IMR-90 (cell line): ENCODE measurements at regions of chr4 and their contacts with region 1.

Region 1: DNA sequence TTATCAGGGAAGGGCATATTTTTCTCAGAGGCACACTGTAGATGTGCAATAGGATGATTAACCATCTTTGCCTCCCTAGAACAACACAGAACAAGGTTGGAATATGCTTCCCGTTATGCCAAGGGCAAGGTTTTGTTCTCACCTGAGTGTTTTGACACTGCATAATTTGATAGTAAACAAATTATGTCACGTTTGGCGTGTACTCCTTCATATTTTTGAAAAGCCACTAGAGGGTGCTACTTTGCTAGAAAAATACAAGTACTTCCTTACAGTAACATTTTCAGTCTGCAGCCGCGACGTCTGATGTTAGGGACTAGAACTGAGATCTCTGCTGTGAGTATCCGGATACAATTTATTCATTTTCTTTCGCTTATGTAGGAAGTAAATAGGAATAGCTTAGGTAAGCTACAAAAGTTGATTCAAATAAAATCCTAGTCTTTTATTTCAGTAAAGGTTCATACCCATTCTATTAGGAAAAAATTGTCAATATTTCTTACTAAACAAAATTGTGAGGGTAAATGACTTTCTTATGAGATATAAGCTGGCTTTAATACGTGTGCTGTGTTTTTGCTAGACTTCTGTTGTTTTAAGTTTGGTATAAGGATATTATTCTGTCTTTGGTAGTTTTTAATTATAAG is 181.1 kb upstream of the WDFY3 start:
- DNase-seq: peak; percentile 54
- ATAC-seq: peak; percentile 76
- H3K4me3 ChIP-seq: no peak overlapping the region
- H3K27ac ChIP-seq: no peak overlapping the region
- H3K4me1 ChIP-seq: no peaks in the 10 kb centered on the region
- H3K27me3 ChIP-seq: peaks cover 1% of the 10 kb centered on the region; the same call in 1 of the 2 replicates
- CTCF ChIP-seq: peak; percentile 57
- POLR2A ChIP-seq: no peak
- RAD21 ChIP-seq: peak; percentile 48

Region 2: GRCh38 chr4:85370430-85371032 is 223.0 kb after region 1 on chr4:
- CTCF ChIA-PET with region 1: interaction called, 4 read pairs
- POLR2A ChIA-PET with region 1: no interaction called
- dilution Hi-C with region 1: no loop called
- in situ Hi-C with region 1: no loop called
- intact Hi-C with region 1: loop called (anchors 1 kb)
- DNase-seq: peak; percentile 18
- ATAC-seq: peak; percentile 87
- H3K4me3 ChIP-seq: no peak overlapping the region
- H3K27ac ChIP-seq: no peak overlapping the region
- H3K4me1 ChIP-seq: no peaks in the 10 kb centered on the region
- H3K27me3 ChIP-seq: no peaks in the 10 kb centered on the region; the same call in 1 of the 2 replicates
- CTCF ChIP-seq: peak; percentile 57
- POLR2A ChIP-seq: no peak
- RAD21 ChIP-seq: peak; percentile 43

Region 3: DNA sequence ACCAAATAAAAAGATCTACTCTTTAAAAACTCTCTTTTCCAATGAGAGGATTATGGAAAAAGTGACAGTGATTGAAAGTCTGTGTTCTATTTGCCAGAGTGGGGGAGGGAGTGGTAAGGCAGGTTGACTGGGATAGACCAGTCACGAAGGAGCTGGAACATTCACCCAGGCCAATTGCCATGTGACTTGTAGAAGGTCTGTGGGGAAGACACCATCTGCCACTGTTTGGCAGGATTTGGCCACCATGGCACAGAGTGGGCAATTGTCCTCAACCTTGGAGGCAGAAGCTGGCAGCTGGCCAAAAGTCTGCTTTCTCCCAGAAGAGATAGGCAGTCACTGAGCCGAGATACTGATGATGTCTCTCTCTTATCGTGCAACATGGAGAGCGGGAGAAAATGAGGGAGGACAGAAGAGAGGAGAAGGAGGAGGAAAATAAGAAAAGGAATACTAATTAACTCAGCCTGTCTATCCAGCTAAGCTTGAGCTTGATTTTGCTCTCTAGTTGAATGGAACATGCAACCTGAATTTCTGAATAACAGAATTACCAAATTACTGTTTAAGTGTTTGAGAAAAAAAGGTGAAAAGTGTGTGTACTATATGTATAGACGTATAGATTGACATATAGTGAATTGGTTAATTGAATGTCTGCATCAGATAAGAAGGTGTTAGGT is 594.5 kb after region 1 on chr4:
- CTCF ChIA-PET with region 1: interaction called, 8 read pairs
- POLR2A ChIA-PET with region 1: no interaction called
- dilution Hi-C with region 1: no loop called
- in situ Hi-C with region 1: loop called (anchors 5 kb)
- intact Hi-C with region 1: no loop called
- DNase-seq: no peak
- ATAC-seq: no peak
- H3K4me3 ChIP-seq: no peak overlapping the region
- H3K27ac ChIP-seq: no peak overlapping the region
- H3K4me1 ChIP-seq: peaks cover 2% of the 10 kb centered on the region; the same call in 1 of the 2 replicates
- H3K27me3 ChIP-seq: no peaks in the 10 kb centered on the region
- CTCF ChIP-seq: no peak
- POLR2A ChIP-seq: no peak
- RAD21 ChIP-seq: no peak

Region 4: DNA sequence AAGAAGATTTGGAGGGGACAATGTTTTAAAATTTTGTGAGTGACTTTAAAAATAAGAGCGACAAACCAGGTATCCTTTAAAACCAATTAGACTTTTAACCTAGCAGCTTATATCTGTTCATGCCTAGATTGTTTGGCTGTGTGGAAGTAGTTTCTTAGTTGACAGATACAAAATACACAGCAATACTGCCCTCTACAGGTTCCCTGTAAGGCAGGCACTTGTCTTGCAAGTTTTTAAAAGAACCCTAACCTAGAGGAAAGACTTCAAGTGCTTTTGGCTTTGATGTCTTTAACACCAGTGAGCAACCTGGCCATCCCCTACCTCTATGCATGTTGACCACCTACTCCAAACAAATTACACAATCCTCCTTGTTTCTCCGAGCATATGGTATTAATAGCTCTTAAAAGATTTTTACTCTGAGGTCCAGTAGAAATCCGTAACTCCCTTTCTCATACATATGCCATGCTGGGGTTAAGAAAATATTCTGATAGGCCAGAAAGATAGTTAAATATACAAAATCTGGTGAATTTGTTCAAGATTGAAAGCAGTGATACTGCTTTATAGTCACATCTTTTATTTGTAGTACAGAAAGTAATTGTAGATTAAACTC is 600.4 kb after region 1 on chr4:
- CTCF ChIA-PET with region 1: interaction called, 8 read pairs
- POLR2A ChIA-PET with region 1: no interaction called
- dilution Hi-C with region 1: no loop called
- in situ Hi-C with region 1: loop called (anchors 5 kb)
- intact Hi-C with region 1: loop called (anchors 1 kb)
- DNase-seq: peak; percentile 83
- ATAC-seq: peak; percentile 83
- H3K4me3 ChIP-seq: no peak overlapping the region
- H3K27ac ChIP-seq: no peak overlapping the region
- H3K4me1 ChIP-seq: no peaks in the 10 kb centered on the region
- H3K27me3 ChIP-seq: no peaks in the 10 kb centered on the region
- CTCF ChIP-seq: peak; percentile 89
- POLR2A ChIP-seq: no peak
- RAD21 ChIP-seq: peak; percentile 81

Region 5: DNA sequence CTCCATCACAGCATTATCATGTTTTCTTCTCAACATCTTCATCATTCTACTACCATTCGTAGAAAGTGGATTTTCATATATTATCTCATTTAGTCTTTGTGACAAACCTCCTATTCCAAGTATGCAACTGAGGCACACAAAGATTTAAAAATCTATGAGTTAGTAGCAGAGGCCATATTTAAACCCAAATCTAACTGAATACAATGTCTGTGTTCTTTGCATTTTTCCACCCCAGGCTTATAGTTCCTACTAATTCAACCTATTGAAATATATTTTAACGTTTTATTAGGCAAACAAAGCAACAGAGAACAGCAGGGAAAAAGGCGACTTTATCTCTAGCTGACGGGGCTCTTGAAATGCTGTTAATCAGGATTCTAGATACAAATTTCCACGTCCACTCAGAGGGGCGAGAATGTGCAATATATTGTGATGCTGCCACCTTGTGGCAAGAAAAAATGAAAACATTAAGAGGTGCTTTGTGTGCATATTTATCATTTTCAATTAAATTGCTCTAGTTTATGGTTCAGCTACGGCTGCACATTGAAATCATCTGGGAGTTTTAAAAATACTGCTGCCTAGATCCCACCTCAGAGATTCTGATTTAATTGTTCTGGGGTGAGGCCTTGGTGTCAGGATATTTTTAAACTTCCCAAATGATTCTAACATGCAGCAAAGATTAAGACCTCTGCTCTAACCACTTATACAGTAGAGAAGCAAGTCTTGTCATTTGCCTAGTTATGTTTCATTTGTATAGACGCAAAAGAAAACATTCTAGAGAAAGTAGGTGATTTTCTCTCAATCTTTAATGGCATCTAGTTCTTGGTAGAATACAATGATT is 896.4 kb after region 1 on chr4:
- CTCF ChIA-PET with region 1: no interaction called
- POLR2A ChIA-PET with region 1: no interaction called
- dilution Hi-C with region 1: no loop called
- in situ Hi-C with region 1: no loop called
- intact Hi-C with region 1: loop called (anchors 1 kb)
- DNase-seq: peak; percentile 55
- ATAC-seq: peak; percentile 74
- H3K4me3 ChIP-seq: no peak overlapping the region
- H3K27ac ChIP-seq: no peak overlapping the region
- H3K4me1 ChIP-seq: no peaks in the 10 kb centered on the region
- H3K27me3 ChIP-seq: no peaks in the 10 kb centered on the region
- CTCF ChIP-seq: peak; percentile 67
- POLR2A ChIP-seq: no peak
- RAD21 ChIP-seq: peak; percentile 79